CD8-positive, alpha-beta T cell (primary cell): ENCODE measurements at regions of chr20 and their contacts with region 1.

Region 1: GRCh38 chr20:62793912-62794724 is 2.2 kb upstream of the MRGBP start:
- DNase-seq: peak; percentile 89 to 99 (median 94)
- ATAC-seq: peak; percentile 76
- H3K4me3 ChIP-seq: peak overlapping the region; percentile 69 to 84
- H3K4me3 Mint-ChIP-seq: peak overlapping the region; percentile 89
- H3K27ac ChIP-seq: peak overlapping the region; percentile 75 to 95
- H3K27ac Mint-ChIP-seq: peak overlapping the region; percentile 93
- H3K4me1 ChIP-seq: peaks cover 38% of the 10 kb centered on the region
- H3K4me1 Mint-ChIP-seq: peaks cover 30% of the 10 kb centered on the region
- H3K27me3 ChIP-seq: no peaks in the 10 kb centered on the region
- H3K27me3 Mint-ChIP-seq: no peaks in the 10 kb centered on the region
- CTCF ChIP-seq: no peak

Region 2: GRCh38 chr20:62302341-62303058 is 491.6 kb before region 1 on chr20 and contains the start of gene ADRM1:
- CTCF ChIA-PET with region 1: no interaction called
- POLR2A ChIA-PET with region 1: no interaction called
- intact Hi-C with region 1: loop called (anchors 5 kb)
- DNase-seq: peak; percentile 93 to 98 (median 95)
- ATAC-seq: peak; percentile 85
- H3K4me3 ChIP-seq: peak within 1 kb of the TSS; percentile 79 to 92
- H3K4me3 Mint-ChIP-seq: peak within 1 kb of the TSS; percentile 93
- H3K27ac ChIP-seq: peak within 1 kb of the TSS; percentile 82 to 88
- H3K27ac Mint-ChIP-seq: peak within 1 kb of the TSS; percentile 97
- H3K4me1 ChIP-seq: peaks cover 26% of the 10 kb centered on the region
- H3K4me1 Mint-ChIP-seq: peaks cover 27% of the 10 kb centered on the region
- H3K27me3 ChIP-seq: no peaks in the 10 kb centered on the region
- H3K27me3 Mint-ChIP-seq: no peaks in the 10 kb centered on the region
- CTCF ChIP-seq: peak; percentile 88
- total RNA-seq, gene ADRM1: 52.7 to 52.9 TPM

Region 3: DNA sequence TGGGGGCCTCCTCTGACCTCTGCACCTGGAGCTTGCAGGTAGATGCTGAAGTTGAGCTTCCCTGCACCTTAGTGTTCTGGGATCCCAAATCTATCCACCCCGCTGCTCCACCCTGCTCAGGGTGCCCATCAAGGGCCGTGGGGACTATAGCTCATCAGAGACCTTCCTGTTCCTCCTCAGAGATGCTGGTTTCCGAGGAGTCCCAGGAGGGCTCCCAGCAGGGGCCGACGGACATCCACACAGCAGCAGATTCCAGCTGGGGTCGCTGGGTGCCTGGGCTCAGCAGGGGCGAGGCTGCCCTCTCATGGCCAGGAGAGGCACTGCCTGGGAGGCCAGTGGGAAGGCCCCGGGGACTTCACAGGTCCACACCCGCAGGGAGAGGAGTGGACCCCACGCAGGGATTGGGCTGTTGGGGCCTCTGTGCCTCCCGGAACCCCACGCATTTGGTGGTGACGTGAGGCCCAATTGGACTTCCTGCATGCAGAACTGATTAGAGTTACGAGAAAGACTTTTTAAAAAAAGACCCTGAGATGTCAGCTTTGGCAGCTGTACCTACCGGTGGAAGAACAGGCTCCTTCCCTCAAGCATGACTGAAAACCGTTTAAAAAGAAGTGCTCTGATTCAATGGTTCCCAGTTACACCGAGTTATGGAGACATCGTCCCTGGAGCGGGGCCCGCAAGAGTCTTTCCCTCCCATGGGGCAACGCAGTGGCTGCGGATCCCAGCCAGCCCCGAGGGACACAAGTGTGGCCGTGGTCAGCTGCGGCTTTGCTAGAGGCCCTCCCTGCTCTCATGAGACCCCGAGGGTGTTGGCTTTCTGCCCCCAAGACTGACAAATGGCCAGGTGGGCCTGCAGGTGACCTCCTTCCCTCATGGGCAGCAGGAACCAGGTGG is 177.1 kb before region 1 on chr20:
- CTCF ChIA-PET with region 1: interaction called, 11 read pairs
- POLR2A ChIA-PET with region 1: no interaction called
- intact Hi-C with region 1: loop called in 1 of 2 experiments (anchors 5 kb)
- DNase-seq: peak; percentile 44 to 82 (median 68)
- ATAC-seq: peak; percentile 86
- H3K4me3 ChIP-seq: no peak overlapping the region
- H3K4me3 Mint-ChIP-seq: no peak overlapping the region
- H3K27ac ChIP-seq: no peak overlapping the region
- H3K27ac Mint-ChIP-seq: peak overlapping the region; percentile 41
- H3K4me1 ChIP-seq: peaks cover 26% of the 10 kb centered on the region
- H3K4me1 Mint-ChIP-seq: peaks cover 22% of the 10 kb centered on the region
- H3K27me3 ChIP-seq: no peaks in the 10 kb centered on the region
- H3K27me3 Mint-ChIP-seq: no peaks in the 10 kb centered on the region
- CTCF ChIP-seq: peak; percentile 82

Region 4: GRCh38 chr20:62652051-62652926 is 141.8 kb before region 1 on chr20:
- CTCF ChIA-PET with region 1: interaction called, 6 read pairs
- POLR2A ChIA-PET with region 1: interaction called, 21 read pairs
- intact Hi-C with region 1: loop called (anchors 1 kb)
- DNase-seq: peak; percentile 44 to 88 (median 75)
- ATAC-seq: peak; percentile 59
- H3K4me3 ChIP-seq: peak overlapping the region; percentile 29 to 35
- H3K4me3 Mint-ChIP-seq: peak overlapping the region; percentile 80
- H3K27ac ChIP-seq: peak overlapping the region; percentile 82 to 83
- H3K27ac Mint-ChIP-seq: peak overlapping the region; percentile 97
- H3K4me1 ChIP-seq: peaks cover 24% of the 10 kb centered on the region
- H3K4me1 Mint-ChIP-seq: peaks cover 31% of the 10 kb centered on the region
- H3K27me3 ChIP-seq: no peaks in the 10 kb centered on the region
- H3K27me3 Mint-ChIP-seq: no peaks in the 10 kb centered on the region
- CTCF ChIP-seq: no peak

Region 5: GRCh38 chr20:62740286-62741141 is 53.6 kb before region 1 on chr20:
- CTCF ChIA-PET with region 1: interaction called, 5 read pairs
- POLR2A ChIA-PET with region 1: interaction called, 23 read pairs
- intact Hi-C with region 1: loop called (anchors 1 kb)
- DNase-seq: peak; percentile 55 to 93 (median 83)
- ATAC-seq: peak; percentile 80
- H3K4me3 ChIP-seq: peak overlapping the region; percentile 34 to 50
- H3K4me3 Mint-ChIP-seq: peak overlapping the region; percentile 74
- H3K27ac ChIP-seq: peak overlapping the region; percentile 72 to 87
- H3K27ac Mint-ChIP-seq: peak overlapping the region; percentile 88
- H3K4me1 ChIP-seq: peaks cover 47% of the 10 kb centered on the region
- H3K4me1 Mint-ChIP-seq: peaks cover 38% of the 10 kb centered on the region
- H3K27me3 ChIP-seq: no peaks in the 10 kb centered on the region
- H3K27me3 Mint-ChIP-seq: peaks cover 5% of the 10 kb centered on the region
- CTCF ChIP-seq: no peak

Region 6: DNA sequence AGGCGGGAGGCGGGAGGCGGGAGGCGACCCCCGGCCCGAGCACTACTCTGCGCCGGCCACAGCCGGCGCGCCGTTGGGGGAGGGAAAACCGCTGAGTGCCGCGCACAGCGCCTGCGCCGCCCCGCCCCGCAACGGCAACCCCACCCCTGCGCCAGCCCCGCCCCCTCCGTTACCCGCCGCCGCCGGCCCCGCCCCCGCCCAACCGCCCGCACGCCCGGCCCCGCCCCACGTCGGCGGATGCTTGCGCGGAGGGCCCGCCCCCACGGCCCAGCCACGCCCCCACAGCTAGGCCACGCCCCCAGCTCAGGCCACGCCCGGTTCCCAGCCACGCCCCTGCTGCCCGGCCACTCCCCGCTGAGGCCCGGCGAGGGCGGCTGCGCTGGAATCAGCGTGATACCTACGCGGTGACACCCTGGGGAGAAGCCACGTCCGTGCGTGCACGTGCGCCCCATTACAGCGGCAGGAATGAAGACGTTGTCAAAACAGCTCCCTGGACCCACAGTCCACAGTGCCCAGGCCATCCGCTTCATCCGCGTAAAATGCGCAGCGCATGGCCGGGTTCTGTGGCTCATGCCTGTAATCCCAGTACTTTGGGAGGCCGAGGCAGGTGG is 67.7 kb after region 1 on chr20 and contains the start of gene TCFL5:
- CTCF ChIA-PET with region 1: no interaction called
- POLR2A ChIA-PET with region 1: interaction called, 11 read pairs
- intact Hi-C with region 1: loop called (anchors 2 to 5 kb)
- DNase-seq: peak; percentile 88 to 99 (median 93)
- ATAC-seq: peak; percentile 90
- H3K4me3 ChIP-seq: peak within 1 kb of the TSS; percentile 20 to 26
- H3K4me3 Mint-ChIP-seq: peak within 1 kb of the TSS; percentile 77
- H3K27ac ChIP-seq: peak within 1 kb of the TSS in 1 of 2 experiments; percentile 56
- H3K27ac Mint-ChIP-seq: peak within 1 kb of the TSS; percentile 88
- H3K4me1 ChIP-seq: peaks cover 15% of the 10 kb centered on the region
- H3K4me1 Mint-ChIP-seq: peaks cover 20% of the 10 kb centered on the region
- H3K27me3 ChIP-seq: no peaks in the 10 kb centered on the region
- H3K27me3 Mint-ChIP-seq: no peaks in the 10 kb centered on the region
- CTCF ChIP-seq: no peak
- total RNA-seq, gene TCFL5: 4.3 to 4.8 TPM

Region 7: GRCh38 chr20:63627129-63627750 is 833.1 kb after region 1 on chr20:
- CTCF ChIA-PET with region 1: no interaction called
- POLR2A ChIA-PET with region 1: interaction called, 3 read pairs
- intact Hi-C with region 1: loop called in 1 of 2 experiments (anchors 10 kb)
- DNase-seq: peak; percentile 90 to 97 (median 94)
- ATAC-seq: peak; percentile 77
- H3K4me3 ChIP-seq: peak overlapping the region; percentile 91 to 100
- H3K4me3 Mint-ChIP-seq: peak overlapping the region; percentile 97
- H3K27ac ChIP-seq: peak overlapping the region; percentile 81 to 91
- H3K27ac Mint-ChIP-seq: peak overlapping the region; percentile 93
- H3K4me1 ChIP-seq: peaks cover 39% of the 10 kb centered on the region
- H3K4me1 Mint-ChIP-seq: peaks cover 43% of the 10 kb centered on the region
- H3K27me3 ChIP-seq: no peaks in the 10 kb centered on the region
- H3K27me3 Mint-ChIP-seq: no peaks in the 10 kb centered on the region
- CTCF ChIP-seq: no peak